ENCODE measurements at regions of chr13 and their contacts with region 1.

Region 1: GRCh38 chr13:47794963-47795362 is 206.1 kb downstream of the SUCLA2 start:
- DNase-seq: peak; percentile 4
- H3K4me3 ChIP-seq: no peak overlapping the region
- H3K27ac ChIP-seq: no peak overlapping the region
- H3K4me1 ChIP-seq: no peaks in the 10 kb centered on the region
- H3K27me3 ChIP-seq: no peaks in the 10 kb centered on the region
- CTCF ChIP-seq: peak; percentile 70 to 72

Region 2: DNA sequence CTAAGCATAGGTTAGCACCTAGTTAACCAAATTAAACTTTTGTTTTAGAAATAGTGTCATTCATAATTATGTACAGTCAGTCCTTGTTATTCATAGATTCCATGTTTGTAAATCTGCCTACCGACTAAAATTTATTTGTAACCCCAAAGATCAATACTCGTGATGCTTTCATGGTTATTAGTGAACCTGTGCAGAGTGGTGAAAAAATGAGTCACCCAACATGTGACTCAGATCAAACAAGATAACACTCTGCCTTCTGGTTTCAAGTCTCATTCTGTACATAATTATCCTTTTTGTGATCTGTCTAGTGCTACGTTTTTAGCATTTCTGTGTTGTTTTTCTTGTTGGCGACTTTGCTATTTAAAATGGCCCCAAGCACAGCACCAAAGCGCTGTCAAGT is 68.6 kb before region 1 on chr13:
- CTCF ChIA-PET with region 1: no interaction called
- dilution Hi-C with region 1: no loop called
- in situ Hi-C with region 1: no loop called
- intact Hi-C with region 1: no loop called
- DNase-seq: no peak
- H3K4me3 ChIP-seq: no peak overlapping the region
- H3K27ac ChIP-seq: no peak overlapping the region
- H3K4me1 ChIP-seq: no peaks in the 10 kb centered on the region
- H3K27me3 ChIP-seq: no peaks in the 10 kb centered on the region
- CTCF ChIP-seq: no peak

Region 3: DNA sequence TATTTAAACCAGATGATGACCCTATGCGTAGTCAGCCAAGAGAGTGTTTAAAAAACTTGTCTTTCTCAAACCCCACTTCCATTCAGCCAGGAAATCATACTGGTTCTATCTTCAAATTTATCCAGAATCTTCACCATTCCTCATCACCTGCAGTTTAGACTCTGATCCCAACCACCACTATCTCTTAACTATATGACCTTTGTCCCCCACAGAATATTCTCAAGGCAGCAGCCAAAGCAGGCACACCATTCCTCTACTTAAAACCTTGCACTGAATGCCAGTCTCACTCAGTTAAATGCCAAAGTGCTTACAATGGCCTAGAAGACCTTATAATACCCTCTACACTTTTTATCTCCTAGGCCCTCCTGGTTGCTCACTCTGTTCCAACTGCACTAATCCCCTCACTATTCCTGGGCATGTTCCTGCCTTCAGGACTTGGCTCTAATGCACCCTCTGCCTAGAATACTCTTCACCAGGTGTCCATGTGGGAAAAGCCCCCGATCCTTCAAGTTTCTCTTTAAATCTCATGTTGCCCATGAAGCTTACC is 196.0 kb after region 1 on chr13:
- CTCF ChIA-PET with region 1: no interaction called
- dilution Hi-C with region 1: no loop called
- in situ Hi-C with region 1: no loop called
- intact Hi-C with region 1: loop called (anchors 5 kb)
- DNase-seq: no peak
- H3K4me3 ChIP-seq: no peak overlapping the region
- H3K27ac ChIP-seq: no peak overlapping the region
- H3K4me1 ChIP-seq: no peaks in the 10 kb centered on the region
- H3K27me3 ChIP-seq: no peaks in the 10 kb centered on the region
- CTCF ChIP-seq: no peak

Region 4: GRCh38 chr13:48043789-48044503 is 249.0 kb after region 1 on chr13:
- CTCF ChIA-PET with region 1: no interaction called
- dilution Hi-C with region 1: loop called (anchors 10 kb)
- in situ Hi-C with region 1: no loop called
- intact Hi-C with region 1: no loop called
- DNase-seq: peak; percentile 16
- H3K4me3 ChIP-seq: no peak overlapping the region
- H3K27ac ChIP-seq: no peak overlapping the region
- H3K4me1 ChIP-seq: peaks cover 11% of the 10 kb centered on the region
- H3K27me3 ChIP-seq: no peaks in the 10 kb centered on the region
- CTCF ChIP-seq: no peak

Region 5: DNA sequence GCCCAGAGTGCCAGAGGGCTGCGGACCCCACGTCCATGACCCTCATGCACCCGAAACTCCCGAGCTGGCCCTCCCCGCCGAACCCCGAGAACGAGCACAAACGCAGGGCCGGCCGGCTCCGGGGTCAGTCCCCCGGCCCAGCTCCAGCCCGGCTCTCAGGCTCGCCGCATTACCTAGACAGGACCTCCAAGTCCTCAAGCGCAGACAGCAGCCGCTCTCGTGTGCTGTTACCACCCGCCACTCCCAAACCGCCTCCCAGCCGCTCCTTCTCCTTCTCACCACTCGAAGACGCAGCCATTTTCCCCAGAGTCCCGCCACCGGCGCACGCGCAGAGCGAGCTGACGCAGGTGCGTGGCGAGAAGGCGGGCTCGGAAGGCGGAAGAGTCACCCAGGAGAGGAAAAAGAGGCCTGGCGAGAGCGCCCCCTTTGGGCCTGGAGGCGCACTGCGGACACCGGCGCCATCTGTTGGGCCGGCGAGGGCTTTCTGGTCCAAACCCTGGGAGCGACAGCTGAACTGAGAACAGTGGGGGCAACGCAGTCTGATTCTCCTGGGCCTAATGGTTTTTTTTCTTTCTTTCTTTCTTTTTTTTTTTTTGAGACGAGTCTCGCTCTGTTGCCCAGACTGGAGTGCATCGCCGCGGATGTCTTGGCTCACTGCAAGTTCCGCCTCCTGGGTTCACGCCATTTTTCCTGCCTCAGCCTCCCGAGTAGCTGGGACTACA is 300.0 kb after region 1 on chr13 and contains the start of gene MED4:
- CTCF ChIA-PET with region 1: no interaction called
- dilution Hi-C with region 1: no loop called
- in situ Hi-C with region 1: no loop called
- intact Hi-C with region 1: loop called (anchors 1 kb)
- DNase-seq: peak; percentile 92
- H3K4me3 ChIP-seq: peak within 1 kb of the TSS; percentile 73 to 98 (median 86)
- H3K27ac ChIP-seq: peak within 1 kb of the TSS; percentile 83
- H3K4me1 ChIP-seq: peaks cover 10% of the 10 kb centered on the region
- H3K27me3 ChIP-seq: no peaks in the 10 kb centered on the region
- CTCF ChIP-seq: peak; percentile 98 to 100
- total RNA-seq, gene MED4: 24.8 to 43.1 TPM